Activated CD4-positive, alpha-beta T cell treated with anti-CD3 and anti-CD28 coated beads, Interleukin-2, amount 10 ng/mL, durations not matched to agents 24 days and 14 days (primary cell): ENCODE measurements at regions of chr9 and their contacts with region 1.

Region 1: DNA sequence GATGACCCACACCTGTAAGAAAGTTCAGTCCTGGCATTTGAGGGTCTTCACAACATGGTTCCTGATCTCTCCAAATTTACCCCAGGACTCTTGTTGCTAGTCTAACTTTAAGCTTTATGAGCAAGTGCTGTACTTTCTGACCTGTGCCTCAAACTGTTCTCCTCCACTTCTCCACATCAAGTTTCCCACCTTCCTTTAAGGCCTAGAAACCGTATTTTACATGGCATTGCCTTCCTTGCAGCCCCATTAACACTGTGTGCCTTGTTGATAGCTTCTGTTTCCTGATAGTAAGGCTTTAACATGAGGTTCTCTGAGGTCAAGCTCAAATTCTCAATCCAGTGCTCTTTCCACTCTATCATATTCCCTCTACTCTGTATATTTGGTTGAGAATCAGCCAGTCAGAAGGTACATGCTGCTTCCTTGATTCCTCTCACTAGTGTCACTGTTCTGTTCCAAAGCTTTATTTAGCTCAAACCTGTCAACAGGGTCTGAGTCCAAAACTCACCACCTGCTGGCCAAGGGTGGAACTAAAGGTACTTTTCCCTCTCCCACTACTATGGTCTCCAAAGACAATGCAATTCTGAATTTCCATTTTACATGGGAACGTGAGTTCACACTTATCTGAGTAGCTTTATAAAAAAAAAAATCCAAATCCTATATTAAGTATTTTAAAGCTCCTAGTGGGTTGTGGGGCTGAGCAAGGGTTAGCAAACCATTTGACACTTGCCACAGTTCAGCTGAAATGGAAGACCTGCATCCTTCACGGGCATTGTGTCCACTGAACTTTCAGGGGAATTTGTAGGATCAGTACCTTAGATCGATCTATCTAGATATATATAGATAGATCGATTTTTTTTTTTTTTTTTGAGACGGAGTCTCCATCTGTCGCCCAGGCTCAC is 21.1 kb downstream of the VCP start:
- DNase-seq: peak; percentile 87
- H3K4me3 Mint-ChIP-seq: no peak overlapping the region
- H3K27ac Mint-ChIP-seq: peak overlapping the region; percentile 2
- H3K4me1 Mint-ChIP-seq: peaks cover 4% of the 10 kb centered on the region
- H3K27me3 Mint-ChIP-seq: no peaks in the 10 kb centered on the region

Region 2: DNA sequence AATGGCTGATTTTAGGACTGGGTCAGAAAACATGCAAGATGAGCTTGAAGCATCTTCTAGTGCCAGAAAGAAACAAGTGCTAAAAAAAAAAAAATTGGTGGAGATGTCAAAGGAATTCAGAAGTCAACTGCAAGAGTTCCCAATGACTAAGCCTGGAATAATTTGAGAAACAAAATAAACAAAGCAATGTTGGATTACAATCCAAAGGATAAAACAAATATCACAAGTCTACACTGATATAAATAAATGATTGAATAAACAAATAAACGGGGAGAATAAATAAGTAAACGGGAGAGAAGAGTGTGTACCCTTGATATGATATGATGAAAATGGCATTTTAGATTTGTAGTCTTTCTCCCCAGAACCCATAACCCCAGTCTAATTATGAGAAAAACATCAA is 278.0 kb before region 1 on chr9:
- intact Hi-C with region 1: no loop called
- DNase-seq: no peak
- H3K4me3 Mint-ChIP-seq: no peak overlapping the region
- H3K27ac Mint-ChIP-seq: no peak overlapping the region
- H3K4me1 Mint-ChIP-seq: peaks cover 3% of the 10 kb centered on the region
- H3K27me3 Mint-ChIP-seq: peaks cover 12% of the 10 kb centered on the region

Region 3: DNA sequence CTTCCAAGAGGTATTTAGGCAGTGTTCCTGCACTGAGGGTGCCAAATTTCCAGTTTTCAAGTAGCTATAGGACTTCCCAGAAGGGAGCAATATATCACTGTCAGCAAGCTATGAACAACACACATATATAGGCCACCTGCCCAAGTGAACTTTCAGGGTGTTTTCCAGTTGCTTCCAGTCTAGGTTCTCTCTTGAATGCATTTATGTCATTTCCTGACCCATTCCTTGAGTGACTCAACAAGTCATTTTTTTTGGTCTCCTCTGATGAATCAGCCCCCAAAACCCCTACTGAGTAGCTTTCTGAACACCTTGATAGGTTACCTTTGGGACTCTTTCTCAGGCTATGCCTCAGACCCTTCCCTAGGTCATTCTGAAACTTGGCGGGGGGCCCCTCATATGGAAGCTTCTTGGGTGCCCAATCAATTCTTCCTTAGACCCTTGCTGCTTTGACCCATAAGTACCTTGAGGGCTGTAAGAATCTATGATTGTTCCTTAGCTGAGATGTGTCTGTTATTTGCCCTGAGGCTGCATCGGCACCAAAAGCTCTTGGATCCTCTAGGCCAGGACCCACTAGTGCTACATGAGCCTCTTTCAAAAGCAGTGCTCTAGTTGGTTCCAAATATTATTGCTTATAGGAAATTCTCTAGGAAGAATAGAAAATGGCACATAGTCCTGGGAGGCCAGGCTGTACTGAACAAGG is 49.4 kb before region 1 on chr9:
- intact Hi-C with region 1: loop called (anchors 5 kb)
- DNase-seq: no peak
- H3K4me3 Mint-ChIP-seq: no peak overlapping the region
- H3K27ac Mint-ChIP-seq: peak overlapping the region; percentile 81
- H3K4me1 Mint-ChIP-seq: peaks cover 38% of the 10 kb centered on the region
- H3K27me3 Mint-ChIP-seq: no peaks in the 10 kb centered on the region